Aorta (tissue), 5 donors: ENCODE measurements at regions of chr1 and their contacts with region 1.

Region 1: GRCh38 chr1:210292231-210292871 is 36.4 kb upstream of the HHAT start:
- DNase-seq: peak; percentile 68 to 81
- ATAC-seq: peak; percentile 73
- H3K4me3 ChIP-seq: peak overlapping the region; percentile 2 to 61
- H3K27ac ChIP-seq: peak overlapping the region; percentile 88 to 99
- H3K4me1 ChIP-seq: peaks cover 0 to 9% of the 10 kb centered on the region in 2 donors
- H3K27me3 ChIP-seq: no peaks in the 10 kb centered on the region

Region 2: GRCh38 chr1:210233216-210234020 is 58.9 kb before region 1 on chr1:
- intact Hi-C with region 1: loop called (anchors 1 to 5 kb)
- DNase-seq: peak; percentile 63 to 88
- ATAC-seq: peak; percentile 67
- H3K4me3 ChIP-seq: peak overlapping the region; percentile 80 to 97
- H3K27ac ChIP-seq: peak overlapping the region; percentile 36 to 89
- H3K4me1 ChIP-seq: no peaks in the 10 kb centered on the region
- H3K27me3 ChIP-seq: no peaks in the 10 kb centered on the region

Region 3: DNA sequence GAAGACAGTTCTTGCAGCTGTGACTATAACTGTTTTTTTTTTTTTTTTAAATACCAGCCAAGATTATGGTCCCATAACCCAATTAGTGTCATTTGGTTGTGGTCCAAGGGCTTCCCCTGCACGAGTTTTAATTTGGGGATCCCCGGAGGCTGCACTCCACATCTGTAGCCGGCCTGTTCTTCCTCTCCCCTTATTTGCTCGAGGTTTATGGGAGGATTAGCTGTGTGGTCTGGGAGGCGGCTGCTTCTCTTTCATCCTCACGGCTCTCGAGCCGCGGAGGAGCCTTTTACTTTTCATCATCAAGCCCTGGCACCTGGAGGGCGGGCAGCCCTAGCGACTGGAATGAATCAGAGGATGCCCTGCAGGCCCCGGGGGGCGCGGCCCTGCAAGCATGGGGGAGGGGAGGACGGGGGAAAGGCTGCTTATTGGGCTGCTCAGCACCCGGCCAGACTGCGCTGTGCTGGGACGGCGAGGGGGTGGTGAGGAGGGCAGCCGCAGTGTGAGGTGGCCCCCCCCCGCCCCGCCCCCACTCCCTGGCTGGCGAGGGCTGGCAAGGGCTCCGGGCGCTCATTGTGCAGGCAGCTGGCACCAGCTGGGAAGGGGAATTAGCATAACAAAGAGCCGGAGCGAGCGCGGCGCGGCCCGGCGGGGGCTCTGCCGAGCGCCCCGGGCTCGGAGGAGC is 41.2 kb before region 1 on chr1:
- intact Hi-C with region 1: loop called in 1 of 2 experiments (anchors 5 kb)
- DNase-seq: peak; percentile 81 to 83
- ATAC-seq: peak; percentile 58
- H3K4me3 ChIP-seq: peak overlapping the region; percentile 35 to 58
- H3K27ac ChIP-seq: no peak overlapping the region
- H3K4me1 ChIP-seq: no peaks in the 10 kb centered on the region
- H3K27me3 ChIP-seq: no peaks in the 10 kb centered on the region

Region 4: DNA sequence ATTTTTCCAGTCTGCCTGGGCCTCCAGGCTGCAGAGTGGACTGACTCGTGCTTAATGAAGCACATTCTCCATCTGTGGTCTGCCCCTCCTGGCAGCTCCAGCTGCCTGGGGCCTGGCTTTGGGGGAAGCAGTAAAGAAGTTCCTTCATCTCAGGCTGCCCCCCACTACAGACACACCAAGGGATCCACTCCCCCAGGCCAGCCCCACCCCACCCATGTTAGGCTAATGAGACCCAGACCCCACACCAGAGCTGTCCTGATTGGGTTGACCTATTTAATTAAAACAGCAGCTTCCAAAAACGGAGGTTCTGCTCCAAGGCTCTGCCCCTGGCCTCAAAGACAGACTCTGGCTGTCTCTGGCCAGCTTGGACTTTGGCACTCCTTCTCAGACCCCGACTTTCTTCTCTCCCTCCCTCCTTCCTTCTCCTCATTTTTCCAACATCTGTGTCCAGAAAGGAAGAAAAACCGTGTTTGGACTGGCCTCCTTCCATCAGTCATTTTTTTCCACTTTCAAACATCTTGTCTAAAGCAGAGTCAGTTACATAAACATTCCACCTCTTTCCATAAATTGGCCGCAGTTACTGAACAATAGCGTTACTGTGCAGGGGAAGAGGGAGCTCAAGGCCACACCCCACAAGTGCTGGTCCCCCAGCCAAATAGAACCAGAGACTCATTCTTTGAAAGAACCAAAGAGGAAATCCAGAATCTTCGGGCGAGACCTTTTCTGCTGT is 30.0 kb before region 1 on chr1:
- intact Hi-C with region 1: loop called in 1 of 2 experiments (anchors 2 kb)
- DNase-seq: peak in 1 of 2 donors; percentile 73
- ATAC-seq: peak; percentile 78
- H3K4me3 ChIP-seq: no peak overlapping the region
- H3K27ac ChIP-seq: peak overlapping the region in 1 of 2 donors; percentile 86
- H3K4me1 ChIP-seq: peaks cover 0 to 4% of the 10 kb centered on the region in 2 donors
- H3K27me3 ChIP-seq: no peaks in the 10 kb centered on the region

Region 5: DNA sequence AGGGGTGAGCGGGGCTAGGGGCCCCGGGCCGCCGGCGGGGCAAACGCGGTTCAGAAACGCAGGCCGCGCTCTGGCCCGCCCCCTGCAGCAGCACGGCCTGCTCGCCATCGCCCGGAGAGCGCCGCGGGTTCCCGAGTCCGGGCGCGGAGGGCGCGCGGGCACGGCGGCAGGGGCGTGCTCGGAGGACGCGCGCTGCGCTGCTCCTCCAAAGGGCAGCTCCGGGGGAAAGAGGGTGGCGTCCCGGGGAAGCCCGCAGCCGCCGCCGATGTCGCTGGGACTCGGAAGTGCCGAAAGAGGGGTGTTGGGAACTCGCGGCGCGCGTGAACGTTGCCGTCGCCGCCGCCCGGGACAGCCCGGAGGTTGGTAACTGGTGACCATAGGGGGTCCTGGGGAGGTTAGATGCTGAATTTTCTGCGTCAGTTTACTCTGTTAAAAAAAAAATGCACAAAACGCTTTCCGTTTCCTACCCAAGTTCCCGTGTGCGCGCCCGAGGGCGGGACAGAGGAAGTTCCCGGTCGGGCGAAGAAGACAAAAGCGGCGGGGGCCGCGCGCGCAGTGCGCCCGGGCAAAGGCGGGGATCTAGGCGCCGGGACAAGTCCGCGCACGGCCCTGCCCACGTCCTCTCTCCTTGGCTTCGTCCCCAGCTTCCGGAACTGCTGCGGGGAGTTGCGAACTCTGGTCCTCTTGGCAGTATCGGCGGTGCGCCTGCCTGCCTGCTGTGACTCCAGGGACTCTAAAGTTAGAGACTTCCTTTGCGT is 36.6 kb after region 1 on chr1 and contains the start of gene HHAT:
- intact Hi-C with region 1: no loop called
- DNase-seq: peak; percentile 92 to 94
- ATAC-seq: peak; percentile 94
- H3K4me3 ChIP-seq: peak within 1 kb of the TSS; percentile 53 to 55
- H3K27ac ChIP-seq: peak within 1 kb of the TSS; percentile 2 to 65
- H3K4me1 ChIP-seq: no peaks in the 10 kb centered on the region
- H3K27me3 ChIP-seq: no peaks in the 10 kb centered on the region
- total RNA-seq, gene HHAT: 3.1 to 3.9 TPM

Region 6: DNA sequence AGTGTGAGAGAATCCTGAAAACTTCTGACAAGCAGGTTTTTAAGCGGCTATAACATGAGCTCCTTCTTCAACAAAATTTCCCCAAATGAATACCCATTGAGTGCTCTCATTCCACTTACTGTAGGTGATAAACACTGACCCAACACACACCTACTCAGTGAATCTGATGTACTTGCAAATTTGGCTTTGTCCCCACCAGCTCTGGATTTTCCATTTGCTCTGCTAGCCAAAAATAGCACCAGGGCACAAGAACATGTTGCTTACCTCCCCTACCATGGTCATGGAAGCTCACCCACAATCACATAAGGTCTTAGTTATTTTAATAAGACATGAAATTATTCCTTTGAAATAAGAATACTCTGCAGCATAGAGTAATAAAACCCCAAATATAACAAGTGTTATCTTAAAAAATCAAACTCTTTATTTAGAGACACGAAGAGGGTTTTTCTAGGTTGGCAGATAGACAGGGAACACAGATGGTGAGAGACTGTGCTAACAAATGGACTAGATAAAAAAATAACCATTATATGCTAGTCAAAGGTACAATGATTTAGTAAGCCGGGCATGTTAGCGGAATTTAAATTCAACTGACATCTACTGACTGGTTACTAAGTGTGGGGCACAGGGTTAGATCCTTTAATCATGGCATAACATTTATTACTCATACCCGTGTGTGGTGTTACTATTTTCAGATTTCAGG is 549.7 kb after region 1 on chr1:
- intact Hi-C with region 1: no loop called
- DNase-seq: no peak
- ATAC-seq: no peak
- H3K4me3 ChIP-seq: no peak overlapping the region
- H3K27ac ChIP-seq: no peak overlapping the region
- H3K4me1 ChIP-seq: no peaks in the 10 kb centered on the region
- H3K27me3 ChIP-seq: no peaks in the 10 kb centered on the region